A549 (cell line): ENCODE measurements at regions of chr14 and their contacts with region 1.

Region 1: DNA sequence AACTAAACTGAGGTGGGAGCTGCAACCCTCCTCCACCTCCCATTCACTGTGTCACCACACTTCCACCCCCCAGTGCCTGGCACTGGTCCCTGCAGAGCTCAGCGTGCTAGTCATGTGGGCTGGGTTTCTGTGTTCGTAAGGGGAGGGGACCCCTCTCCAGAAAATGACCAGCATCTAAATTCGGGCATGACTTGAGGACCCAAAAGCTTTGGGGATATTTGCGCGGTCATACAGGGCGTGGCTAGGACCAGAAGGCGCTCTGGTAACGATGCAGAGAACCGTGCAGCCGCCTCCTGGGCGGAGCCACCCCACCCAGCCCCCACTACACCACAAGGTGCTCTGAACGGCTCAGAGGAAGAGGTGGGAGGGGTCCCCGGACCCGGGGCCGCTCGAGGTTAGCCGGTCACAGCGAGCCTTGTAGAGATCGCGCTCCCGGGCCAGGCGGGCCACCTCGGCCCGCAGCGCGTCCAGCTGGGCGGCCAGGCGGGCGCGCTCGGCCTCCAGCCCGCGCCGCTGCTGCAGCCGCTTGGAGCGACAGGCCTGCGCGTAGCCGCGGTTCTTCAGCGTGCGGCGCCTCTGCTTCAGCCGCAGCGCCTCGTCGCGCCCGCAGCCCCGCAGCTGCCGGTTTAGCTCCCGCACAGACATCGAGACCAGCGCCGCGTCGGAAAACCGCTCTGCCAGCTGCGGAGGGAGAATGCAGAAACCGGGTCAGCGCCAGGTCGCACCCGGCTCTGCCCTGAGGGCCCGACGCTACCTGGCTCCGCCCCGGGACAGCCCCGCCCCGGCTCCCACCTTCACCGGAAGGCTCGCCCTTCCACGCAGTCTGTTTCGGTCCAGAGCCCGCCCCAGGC is 9.8 kb downstream of the CPNE6 start:
- DNase-seq: peak; percentile 28 to 67
- ATAC-seq: peak; percentile 88 to 90
- H3K4me3 ChIP-seq: peak overlapping the region; percentile 79
- H3K27ac ChIP-seq: peak overlapping the region; percentile 92 to 93
- H3K4me1 ChIP-seq: peaks cover 15% of the 10 kb centered on the region
- CTCF ChIP-seq: no peak
- EP300 ChIP-seq: no peak
- POLR2A ChIP-seq: peak; percentile 46
- RAD21 ChIP-seq: no peak

Region 2: DNA sequence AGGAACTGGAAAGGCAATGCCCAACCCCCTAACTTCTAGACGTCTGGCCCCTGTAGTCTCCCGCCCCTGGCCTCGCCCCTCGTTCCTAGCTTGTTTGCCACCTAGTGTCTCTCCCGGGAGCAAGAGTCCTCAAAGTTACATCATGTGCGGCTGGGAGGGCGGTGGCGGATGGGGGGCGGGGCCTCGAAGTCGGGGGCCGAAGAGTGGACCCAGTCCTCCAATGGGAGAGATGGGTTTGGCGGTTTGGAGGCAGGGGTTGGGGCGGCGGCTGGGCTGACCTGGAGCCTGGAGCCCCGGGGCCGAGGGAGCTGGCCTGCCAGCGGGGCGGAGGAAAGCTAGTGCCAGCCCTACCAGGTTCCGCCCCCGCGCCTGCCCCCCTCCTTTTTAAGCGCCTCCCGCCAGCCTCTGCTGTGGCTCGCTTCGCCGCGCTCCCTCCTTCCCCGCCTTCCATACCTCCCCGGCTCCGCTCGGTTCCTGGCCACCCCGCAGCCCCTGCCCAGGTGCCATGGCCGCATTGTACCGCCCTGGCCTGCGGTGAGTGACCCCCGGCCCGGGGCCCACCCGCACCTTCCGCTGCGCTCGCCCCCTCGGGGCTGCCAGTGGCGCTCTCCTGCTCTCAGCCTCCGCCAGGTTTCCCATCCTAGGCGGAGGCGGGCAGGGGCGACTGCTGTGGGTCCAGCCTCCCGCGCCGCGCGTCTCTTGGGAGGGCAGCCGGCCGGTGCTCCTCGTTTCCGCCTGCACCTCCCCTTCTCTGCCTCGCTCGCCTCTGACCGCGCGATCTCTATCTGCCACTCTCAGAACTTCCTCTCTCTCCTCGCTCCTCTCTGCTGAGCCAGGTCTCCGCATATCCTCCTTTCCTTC is 13.0 kb after region 1 on chr14 and contains the start of gene PCK2:
- CTCF ChIA-PET with region 1: interaction called, 80 read pairs
- POLR2A ChIA-PET with region 1: interaction called, 16 read pairs
- DNase-seq: peak; percentile 95 to 97
- ATAC-seq: peak; percentile 93 to 94
- H3K4me3 ChIP-seq: peak within 1 kb of the TSS; percentile 70
- H3K27ac ChIP-seq: peak within 1 kb of the TSS; percentile 95 to 100
- H3K4me1 ChIP-seq: peaks cover 18% of the 10 kb centered on the region
- CTCF ChIP-seq: no peak
- EP300 ChIP-seq: no peak
- POLR2A ChIP-seq: peak; percentile 95
- RAD21 ChIP-seq: no peak
- polyA plus RNA-seq, gene PCK2: 52.1 and 60.2 TPM in 2 replicates

Region 3: GRCh38 chr14:24100197-24100981 is 19.3 kb after region 1 on chr14:
- CTCF ChIA-PET with region 1: interaction called, 10 read pairs
- POLR2A ChIA-PET with region 1: no interaction called
- DNase-seq: no peak
- ATAC-seq: no peak
- H3K4me3 ChIP-seq: no peak overlapping the region
- H3K27ac ChIP-seq: no peak overlapping the region
- H3K4me1 ChIP-seq: peaks cover 6% of the 10 kb centered on the region
- CTCF ChIP-seq: no peak
- EP300 ChIP-seq: no peak
- POLR2A ChIP-seq: no peak
- RAD21 ChIP-seq: no peak